GM12878 (cell line): ENCODE measurements at regions of chr4 and their contacts with region 1.

Region 1: DNA sequence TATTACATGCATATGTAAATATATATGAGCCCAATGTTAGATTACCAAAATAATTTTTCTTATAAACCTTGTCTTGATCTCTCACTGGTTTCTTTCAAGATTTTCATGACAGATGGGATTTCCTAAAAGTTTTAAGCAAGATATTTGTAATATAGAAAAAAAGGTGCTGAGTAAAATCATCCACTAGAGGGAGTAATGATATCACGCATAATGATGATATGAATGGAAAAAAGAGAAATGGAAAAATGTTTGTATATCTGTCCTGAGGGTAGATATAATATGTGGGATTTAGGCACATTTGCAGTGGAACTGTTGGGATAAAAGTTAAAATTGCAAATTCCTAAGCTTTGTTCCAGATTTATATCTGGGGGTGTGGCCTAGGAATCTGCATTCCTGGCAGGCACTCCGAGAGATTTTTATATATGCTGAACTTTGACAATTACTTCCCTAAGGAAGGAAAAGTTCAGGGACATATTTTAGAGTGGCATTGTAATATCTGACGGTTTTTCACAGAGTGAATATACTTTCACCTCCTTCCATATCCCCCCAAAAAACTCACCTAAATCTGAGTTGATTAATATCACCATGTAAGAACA is 60.5 kb downstream of the TMA16 start:
- DNase-seq: no peak
- ATAC-seq: no peak
- H3K4me3 ChIP-seq: no peak overlapping the region
- H3K27ac ChIP-seq: no peak overlapping the region
- H3K4me1 ChIP-seq: peaks cover 18% of the 10 kb centered on the region
- H3K27me3 ChIP-seq: no peaks in the 10 kb centered on the region
- CTCF ChIP-seq: peak; percentile 41 to 63 (median 58); a peak in 4 of 6 replicates
- EP300 ChIP-seq: no peak
- POLR2A ChIP-seq: no peak
- RAD21 ChIP-seq: peak; percentile 72

Region 2: DNA sequence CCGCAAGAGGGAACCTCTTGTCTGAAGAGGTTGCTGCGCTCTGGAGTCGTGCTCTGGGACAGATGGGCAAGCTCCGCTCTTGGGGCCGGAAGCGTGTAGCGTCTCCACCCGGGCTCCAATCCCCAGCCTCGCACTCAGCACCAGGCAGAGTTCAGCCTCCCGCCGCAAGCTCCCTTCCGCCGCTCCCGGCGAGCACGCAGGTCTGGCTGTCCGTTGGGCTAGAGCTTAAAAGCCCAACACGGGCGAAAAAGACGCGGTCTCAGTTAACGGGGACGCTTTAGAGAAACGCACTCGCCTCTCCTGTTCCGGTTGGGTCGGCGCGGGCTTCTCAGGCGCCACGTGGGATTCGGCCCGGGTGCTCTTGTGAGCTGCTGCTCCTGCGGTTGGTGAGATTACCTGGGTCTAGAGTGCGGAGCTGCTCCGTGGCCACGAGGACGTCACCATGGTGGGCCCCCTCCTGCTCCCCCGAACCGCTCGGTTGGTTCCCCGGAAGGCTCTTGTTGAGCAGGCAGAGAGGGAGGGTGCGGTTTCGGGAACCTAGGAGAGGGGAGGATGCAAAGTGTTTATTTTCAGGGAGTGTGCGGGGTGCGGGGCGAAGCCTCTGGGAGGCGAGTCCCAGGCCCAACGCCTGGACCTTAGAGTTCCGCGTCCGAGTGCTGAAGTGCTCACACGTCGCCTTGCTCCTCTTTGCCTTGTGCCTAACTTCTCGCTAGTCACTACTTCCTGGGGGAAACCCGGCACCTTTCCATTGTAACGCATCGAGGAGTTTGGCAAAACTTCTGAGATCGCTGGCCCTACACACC is 60.4 kb before region 1 on chr4 and contains the start of gene TMA16:
- CTCF ChIA-PET with region 1: interaction called, 41 read pairs
- POLR2A ChIA-PET with region 1: no interaction called
- RAD21 ChIA-PET with region 1: interaction called, 19 read pairs
- SMC1A ChIA-PET with region 1: interaction called, 33 read pairs
- in situ Hi-C with region 1: no loop called
- intact Hi-C with region 1: no loop called
- DNase-seq: peak; percentile 77
- ATAC-seq: peak; percentile 86
- H3K4me3 ChIP-seq: peak within 1 kb of the TSS; percentile 85
- H3K27ac ChIP-seq: peak within 1 kb of the TSS; percentile 97
- H3K4me1 ChIP-seq: peaks cover 5% of the 10 kb centered on the region; the same call in 1 of the 2 replicates
- H3K27me3 ChIP-seq: no peaks in the 10 kb centered on the region
- CTCF ChIP-seq: no peak
- EP300 ChIP-seq: peak in 1 of 2 experiments; percentile 27; a peak in 1 of 4 replicates
- POLR2A ChIP-seq: peak; percentile 90
- RAD21 ChIP-seq: no peak
- polyA plus RNA-seq, gene TMA16: 65.4 to 91.0 TPM

Region 3: DNA sequence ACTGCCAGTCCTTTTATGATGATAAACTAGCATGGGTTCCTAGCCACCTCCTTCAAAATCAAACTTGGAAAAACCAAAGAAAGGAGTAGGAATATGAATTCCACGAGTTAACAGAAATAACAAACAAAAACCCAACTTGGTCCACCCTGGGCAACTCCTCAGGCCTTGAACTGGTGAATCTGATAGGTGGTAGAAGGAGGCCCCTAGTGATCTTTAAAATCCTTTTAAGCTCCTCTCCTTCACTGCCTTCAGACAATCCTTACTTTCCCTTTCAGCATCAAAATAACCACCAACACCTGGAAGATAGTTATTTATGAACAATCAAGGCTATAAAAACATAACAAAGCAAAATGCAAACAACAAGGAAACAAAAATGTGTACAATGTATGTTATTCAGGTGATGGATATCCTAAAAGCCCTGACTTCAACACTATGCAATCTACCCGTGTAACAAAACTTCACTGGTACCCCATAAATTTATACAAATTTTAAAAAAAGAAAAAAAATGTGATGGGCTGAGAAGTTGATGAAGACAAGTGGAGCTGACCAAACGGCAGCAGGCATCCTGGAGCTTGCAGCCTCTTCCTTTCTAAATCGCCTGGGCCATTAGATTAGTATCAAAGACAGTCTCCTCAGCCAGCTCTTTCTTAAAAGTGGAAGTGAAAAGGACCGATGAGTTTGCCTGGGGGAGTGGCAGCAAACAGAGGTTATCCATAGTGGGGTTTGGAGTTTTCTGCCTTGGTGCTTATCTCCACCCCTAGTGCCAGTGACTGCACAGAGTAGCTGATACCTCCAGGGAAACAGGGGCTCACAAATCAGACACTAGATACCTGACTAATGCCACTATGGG is 119.1 kb after region 1 on chr4:
- CTCF ChIA-PET with region 1: interaction called, 571 read pairs
- POLR2A ChIA-PET with region 1: interaction called, 6 read pairs
- RAD21 ChIA-PET with region 1: interaction called, 247 read pairs
- SMC1A ChIA-PET with region 1: interaction called, 727 read pairs
- in situ Hi-C with region 1: loop called (anchors 5 kb)
- intact Hi-C with region 1: no loop called
- DNase-seq: no peak
- ATAC-seq: peak; percentile 90
- H3K4me3 ChIP-seq: no peak overlapping the region; the same call in 1 of the 2 replicates
- H3K27ac ChIP-seq: no peak overlapping the region
- H3K4me1 ChIP-seq: no peaks in the 10 kb centered on the region; the same call in 1 of the 2 replicates
- H3K27me3 ChIP-seq: no peaks in the 10 kb centered on the region
- CTCF ChIP-seq: no peak
- EP300 ChIP-seq: no peak
- POLR2A ChIP-seq: no peak
- RAD21 ChIP-seq: no peak

Region 4: DNA sequence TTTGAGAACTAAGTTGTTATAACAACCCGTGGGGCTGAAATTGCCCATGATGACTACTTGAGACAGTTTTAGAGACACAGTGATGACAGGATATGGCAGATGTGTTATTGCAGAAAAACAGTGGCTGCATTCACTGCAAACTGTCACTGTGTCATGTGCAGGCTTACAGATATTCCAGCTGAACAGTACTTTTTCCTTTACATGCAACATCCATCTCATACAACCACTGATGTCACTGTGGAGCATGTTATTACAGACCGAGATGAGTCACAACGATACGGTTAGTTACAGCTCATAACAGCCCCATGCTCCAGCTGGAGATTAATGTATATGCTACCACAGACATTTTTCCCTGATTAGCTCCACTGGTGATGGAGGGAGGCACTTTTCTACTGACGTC is 146.9 kb after region 1 on chr4:
- CTCF ChIA-PET with region 1: interaction called, 4 read pairs
- POLR2A ChIA-PET with region 1: no interaction called
- RAD21 ChIA-PET with region 1: interaction called, 5 read pairs
- SMC1A ChIA-PET with region 1: interaction called, 15 read pairs
- in situ Hi-C with region 1: no loop called
- intact Hi-C with region 1: no loop called
- DNase-seq: peak; percentile 49
- ATAC-seq: peak; percentile 93
- H3K4me3 ChIP-seq: no peak overlapping the region
- H3K27ac ChIP-seq: no peak overlapping the region
- H3K4me1 ChIP-seq: peaks cover 9% of the 10 kb centered on the region; the same call in 1 of the 2 replicates
- H3K27me3 ChIP-seq: no peaks in the 10 kb centered on the region
- CTCF ChIP-seq: no peak
- EP300 ChIP-seq: peak; percentile 49 to 77; a peak in 2 of 4 replicates
- POLR2A ChIP-seq: no peak
- RAD21 ChIP-seq: no peak

Region 5: DNA sequence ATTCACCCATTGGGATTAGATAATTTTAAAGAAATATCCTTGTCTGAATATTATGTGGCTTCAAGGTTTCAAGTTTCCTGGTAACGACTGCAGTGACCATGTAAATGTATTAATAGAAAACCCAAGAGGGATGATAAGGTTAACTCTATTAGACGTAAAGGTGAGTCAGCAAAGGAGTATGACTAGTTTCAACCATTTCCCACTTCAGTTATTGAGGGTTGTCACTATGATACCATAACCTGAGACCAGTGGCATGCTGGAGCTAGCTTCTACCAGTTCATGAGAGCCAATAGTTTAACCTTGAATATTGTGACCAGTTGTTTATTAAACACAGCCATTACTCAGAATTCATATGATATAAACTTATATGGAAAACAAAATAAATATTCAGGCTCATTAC is 209.6 kb after region 1 on chr4:
- CTCF ChIA-PET with region 1: interaction called, 393 read pairs
- POLR2A ChIA-PET with region 1: no interaction called
- RAD21 ChIA-PET with region 1: interaction called, 31 read pairs
- SMC1A ChIA-PET with region 1: interaction called, 261 read pairs
- in situ Hi-C with region 1: loop called (anchors 5 kb)
- intact Hi-C with region 1: no loop called
- DNase-seq: no peak
- ATAC-seq: no peak
- H3K4me3 ChIP-seq: no peak overlapping the region
- H3K27ac ChIP-seq: no peak overlapping the region
- H3K4me1 ChIP-seq: no peaks in the 10 kb centered on the region
- H3K27me3 ChIP-seq: no peaks in the 10 kb centered on the region
- CTCF ChIP-seq: no peak
- EP300 ChIP-seq: no peak
- POLR2A ChIP-seq: no peak
- RAD21 ChIP-seq: no peak

Region 6: GRCh38 chr4:164023214-164023613 is 468.2 kb after region 1 on chr4:
- CTCF ChIA-PET with region 1: interaction called, 5 read pairs
- POLR2A ChIA-PET with region 1: no interaction called
- RAD21 ChIA-PET with region 1: interaction called, 4 read pairs
- SMC1A ChIA-PET with region 1: interaction called, 7 read pairs
- in situ Hi-C with region 1: loop called (anchors 5 kb)
- intact Hi-C with region 1: no loop called
- DNase-seq: no peak
- ATAC-seq: peak; percentile 71
- H3K4me3 ChIP-seq: no peak overlapping the region
- H3K27ac ChIP-seq: no peak overlapping the region
- H3K4me1 ChIP-seq: no peaks in the 10 kb centered on the region
- H3K27me3 ChIP-seq: no peaks in the 10 kb centered on the region
- CTCF ChIP-seq: peak in 1 of 3 experiments; percentile 22; a peak in 2 of 6 replicates
- EP300 ChIP-seq: no peak
- POLR2A ChIP-seq: no peak
- RAD21 ChIP-seq: 0 out of 2 replicates have a peak, but pooled peaks have one; percentile 8

Region 7: DNA sequence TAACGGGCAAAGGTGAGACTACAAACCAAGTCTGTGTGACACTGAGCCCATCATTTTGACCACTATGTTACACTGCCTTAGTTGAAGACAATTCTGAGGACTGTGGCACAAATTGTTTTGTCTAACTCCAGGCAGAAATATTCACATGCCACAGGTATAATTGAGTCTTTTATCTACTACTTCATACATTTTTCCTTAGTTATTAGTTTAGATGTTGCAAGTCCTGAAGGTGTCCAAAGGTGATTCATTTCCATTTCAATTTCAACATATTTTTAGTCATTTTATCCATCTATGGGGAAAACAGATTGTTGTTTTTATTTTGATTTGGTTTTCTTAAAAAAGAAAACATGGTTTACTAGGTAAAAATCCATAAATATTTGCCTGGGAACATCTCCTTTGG is 857.3 kb after region 1 on chr4:
- CTCF ChIA-PET with region 1: no interaction called
- POLR2A ChIA-PET with region 1: no interaction called
- RAD21 ChIA-PET with region 1: no interaction called
- SMC1A ChIA-PET with region 1: no interaction called
- in situ Hi-C with region 1: no loop called
- intact Hi-C with region 1: no loop called
- DNase-seq: no peak
- ATAC-seq: no peak
- H3K4me3 ChIP-seq: no peak overlapping the region
- H3K27ac ChIP-seq: no peak overlapping the region
- H3K4me1 ChIP-seq: no peaks in the 10 kb centered on the region
- H3K27me3 ChIP-seq: no peaks in the 10 kb centered on the region
- CTCF ChIP-seq: no peak
- EP300 ChIP-seq: no peak
- POLR2A ChIP-seq: no peak
- RAD21 ChIP-seq: no peak